GM12878 (cell line): ENCODE measurements at regions of chr10 and their contacts with region 1.

Region 1: DNA sequence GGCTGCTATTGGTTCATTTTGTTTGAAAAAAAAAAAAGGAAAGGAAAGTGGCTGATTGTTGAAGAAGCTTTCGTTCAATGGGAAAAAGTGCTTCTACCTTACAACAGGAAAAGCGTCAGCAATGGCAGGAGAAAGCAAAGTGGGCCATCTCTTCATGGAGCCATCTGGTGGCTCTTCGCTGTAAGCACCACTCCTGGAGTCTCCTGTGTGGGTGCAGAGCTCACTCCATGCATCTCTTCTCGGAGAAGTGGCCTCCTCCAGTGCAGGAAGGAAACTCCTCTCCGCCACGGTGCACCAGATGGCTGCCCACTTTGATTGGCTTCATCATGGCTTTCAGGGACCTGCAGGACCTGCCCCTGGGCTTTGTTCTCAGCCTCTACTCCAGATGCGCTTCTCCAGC is 250.9 kb downstream of the PTEN start:
- DNase-seq: no peak
- ATAC-seq: peak; percentile 61
- H3K4me3 ChIP-seq: no peak overlapping the region
- H3K27ac ChIP-seq: peak overlapping the region; percentile 86
- H3K4me1 ChIP-seq: peaks cover 87% of the 10 kb centered on the region
- H3K27me3 ChIP-seq: no peaks in the 10 kb centered on the region
- CTCF ChIP-seq: peak; percentile 69 to 73 (median 72)
- EP300 ChIP-seq: no peak
- POLR2A ChIP-seq: no peak
- RAD21 ChIP-seq: peak; percentile 86

Region 2: DNA sequence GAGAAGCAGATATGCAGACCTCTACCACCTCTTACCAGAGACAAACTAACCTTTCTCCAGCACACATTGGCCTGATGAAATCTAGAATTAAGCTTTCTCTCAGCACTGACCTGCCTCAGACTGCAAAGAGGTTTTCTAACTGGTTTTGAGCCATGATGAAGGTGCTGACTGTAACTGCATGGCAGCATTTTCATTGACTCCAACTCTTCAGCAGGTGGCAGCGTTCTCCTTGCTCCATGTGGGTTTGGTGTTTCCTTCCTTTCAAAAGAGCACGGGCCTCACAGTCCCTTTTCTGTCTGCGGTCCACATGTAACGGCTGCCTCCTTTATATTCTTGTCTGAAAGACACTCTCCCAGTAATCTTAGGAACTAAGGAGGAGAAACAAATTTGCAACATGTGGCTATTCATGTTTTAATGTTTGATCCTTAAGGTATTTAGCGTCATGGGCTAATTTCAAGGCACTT is 263.6 kb before region 1 on chr10:
- CTCF ChIA-PET with region 1: interaction called, 22 read pairs
- POLR2A ChIA-PET with region 1: no interaction called
- RAD21 ChIA-PET with region 1: interaction called, 3 read pairs
- SMC1A ChIA-PET with region 1: interaction called, 4 read pairs
- in situ Hi-C with region 1: no loop called
- intact Hi-C with region 1: no loop called
- DNase-seq: no peak
- ATAC-seq: peak; percentile 96
- H3K4me3 ChIP-seq: no peak overlapping the region
- H3K27ac ChIP-seq: no peak overlapping the region
- H3K4me1 ChIP-seq: no peaks in the 10 kb centered on the region
- H3K27me3 ChIP-seq: no peaks in the 10 kb centered on the region
- CTCF ChIP-seq: peak; percentile 58 to 74 (median 67); a peak in 5 of 6 replicates
- EP300 ChIP-seq: no peak
- POLR2A ChIP-seq: no peak
- RAD21 ChIP-seq: peak; percentile 74

Region 3: DNA sequence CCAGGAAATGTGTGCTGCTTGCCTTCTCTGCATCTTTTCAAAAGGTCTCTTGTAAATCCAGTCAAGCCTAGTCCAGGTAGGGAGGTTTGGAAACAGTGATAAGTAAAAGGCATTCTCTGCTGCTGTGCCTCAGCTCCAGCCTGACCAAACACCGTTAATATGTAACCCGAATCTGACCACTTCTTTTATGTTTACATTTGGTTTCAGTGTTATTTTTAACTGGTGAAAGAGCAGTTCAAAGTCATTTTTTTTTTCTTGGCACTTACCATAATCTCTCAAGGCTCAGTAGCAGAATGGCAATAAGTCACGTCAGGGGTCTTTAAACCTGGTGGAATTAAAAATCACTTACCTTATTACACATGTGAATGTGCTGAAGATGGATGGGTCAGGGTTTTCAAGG is 34.2 kb before region 1 on chr10:
- CTCF ChIA-PET with region 1: interaction called, 3 read pairs
- POLR2A ChIA-PET with region 1: interaction called, 3 read pairs
- RAD21 ChIA-PET with region 1: interaction called, 14 read pairs
- SMC1A ChIA-PET with region 1: interaction called, 229 read pairs
- in situ Hi-C with region 1: no loop called
- intact Hi-C with region 1: no loop called
- DNase-seq: no peak
- ATAC-seq: peak; percentile 75
- H3K4me3 ChIP-seq: peak overlapping the region; percentile 30
- H3K27ac ChIP-seq: peak overlapping the region; percentile 60
- H3K4me1 ChIP-seq: peaks cover 52% of the 10 kb centered on the region
- H3K27me3 ChIP-seq: no peaks in the 10 kb centered on the region
- CTCF ChIP-seq: no peak
- EP300 ChIP-seq: peak; percentile 75 to 82; a peak in 3 of 4 replicates
- POLR2A ChIP-seq: no peak
- RAD21 ChIP-seq: 0 out of 2 replicates have a peak, but pooled peaks have one; percentile 15

Region 4: DNA sequence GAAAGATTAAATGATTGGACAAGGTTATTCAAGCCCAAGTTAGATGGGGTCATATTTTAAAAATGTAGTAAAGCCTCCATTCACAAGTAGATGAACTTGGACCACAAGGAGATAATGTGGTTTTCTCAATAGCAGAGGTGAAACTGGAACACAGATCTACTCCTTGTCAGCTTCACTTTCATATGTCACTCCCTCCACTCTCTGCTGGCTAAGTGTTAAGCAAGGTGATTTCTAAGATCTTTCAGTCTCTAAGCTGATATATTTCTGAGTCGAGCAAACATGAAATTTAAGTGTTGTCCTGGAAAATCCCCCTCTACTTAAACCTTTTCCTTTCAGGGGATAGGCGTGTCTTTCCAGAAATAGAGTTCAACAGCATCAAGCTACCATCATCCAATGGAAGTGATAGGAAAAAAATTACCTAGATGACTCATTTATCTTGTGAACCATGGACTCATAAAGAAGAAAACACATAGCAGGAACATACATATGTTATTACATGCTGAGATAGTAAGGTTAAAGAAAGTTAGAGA is 24.0 kb after region 1 on chr10:
- CTCF ChIA-PET with region 1: interaction called, 8 read pairs
- POLR2A ChIA-PET with region 1: no interaction called
- RAD21 ChIA-PET with region 1: interaction called, 5 read pairs
- SMC1A ChIA-PET with region 1: interaction called, 15 read pairs
- in situ Hi-C with region 1: no loop called
- intact Hi-C with region 1: loop called (anchors 2 kb)
- DNase-seq: peak; percentile 74
- ATAC-seq: peak; percentile 97
- H3K4me3 ChIP-seq: no peak overlapping the region
- H3K27ac ChIP-seq: peak overlapping the region; percentile 16
- H3K4me1 ChIP-seq: peaks cover 16% of the 10 kb centered on the region; the same call in 1 of the 2 replicates
- H3K27me3 ChIP-seq: no peaks in the 10 kb centered on the region
- CTCF ChIP-seq: no peak
- EP300 ChIP-seq: peak in 1 of 2 experiments; percentile 72; a peak in 3 of 4 replicates
- POLR2A ChIP-seq: no peak
- RAD21 ChIP-seq: no peak

Region 5: GRCh38 chr10:88270871-88271713 is 156.7 kb after region 1 on chr10:
- CTCF ChIA-PET with region 1: interaction called, 4 read pairs
- POLR2A ChIA-PET with region 1: no interaction called
- RAD21 ChIA-PET with region 1: interaction called, 7 read pairs
- SMC1A ChIA-PET with region 1: interaction called, 3 read pairs
- in situ Hi-C with region 1: no loop called
- intact Hi-C with region 1: loop called (anchors 1 kb)
- DNase-seq: peak; percentile 97
- ATAC-seq: peak; percentile 95
- H3K4me3 ChIP-seq: no peak overlapping the region; the same call in 1 of the 2 replicates
- H3K27ac ChIP-seq: peak overlapping the region; percentile 96
- H3K4me1 ChIP-seq: peaks cover 48% of the 10 kb centered on the region
- H3K27me3 ChIP-seq: no peaks in the 10 kb centered on the region
- CTCF ChIP-seq: no peak
- EP300 ChIP-seq: peak; percentile 93 to 95
- POLR2A ChIP-seq: peak; percentile 7; the same call in 1 of the 2 replicates
- RAD21 ChIP-seq: peak; percentile 17; the same call in 1 of the 2 replicates

Region 6: GRCh38 chr10:88392222-88392621 is 277.9 kb after region 1 on chr10:
- CTCF ChIA-PET with region 1: interaction called, 51 read pairs
- POLR2A ChIA-PET with region 1: interaction called, 9 read pairs
- RAD21 ChIA-PET with region 1: interaction called, 102 read pairs
- SMC1A ChIA-PET with region 1: interaction called, 192 read pairs
- in situ Hi-C with region 1: no loop called
- intact Hi-C with region 1: loop called (anchors 2 kb)
- DNase-seq: peak; percentile 80
- ATAC-seq: peak; percentile 95
- H3K4me3 ChIP-seq: peak overlapping the region; percentile 28; the same call in 1 of the 2 replicates
- H3K27ac ChIP-seq: peak overlapping the region; percentile 82
- H3K4me1 ChIP-seq: peaks cover 46% of the 10 kb centered on the region
- H3K27me3 ChIP-seq: no peaks in the 10 kb centered on the region
- CTCF ChIP-seq: no peak
- EP300 ChIP-seq: no peak
- POLR2A ChIP-seq: 0 out of 2 replicates have a peak, but pooled peaks have one; percentile 30
- RAD21 ChIP-seq: peak; percentile 26